MCF 10A (cell line): ENCODE measurements at regions of chrX and their contacts with region 1.

Region 1: GRCh38 chrX:65667503-65668376 is at the start of gene MSN:
- DNase-seq: peak; percentile 61
- H3K4me3 Mint-ChIP-seq: peak within 1 kb of the TSS; percentile 83
- H3K27ac Mint-ChIP-seq: peak within 1 kb of the TSS; percentile 76
- H3K4me1 Mint-ChIP-seq: peaks cover 23% of the 10 kb centered on the region
- H3K27me3 Mint-ChIP-seq: no peaks in the 10 kb centered on the region
- CTCF ChIP-seq: no peak
- total RNA-seq, gene MSN: 224 and 278 TPM in 2 replicates

Region 2: DNA sequence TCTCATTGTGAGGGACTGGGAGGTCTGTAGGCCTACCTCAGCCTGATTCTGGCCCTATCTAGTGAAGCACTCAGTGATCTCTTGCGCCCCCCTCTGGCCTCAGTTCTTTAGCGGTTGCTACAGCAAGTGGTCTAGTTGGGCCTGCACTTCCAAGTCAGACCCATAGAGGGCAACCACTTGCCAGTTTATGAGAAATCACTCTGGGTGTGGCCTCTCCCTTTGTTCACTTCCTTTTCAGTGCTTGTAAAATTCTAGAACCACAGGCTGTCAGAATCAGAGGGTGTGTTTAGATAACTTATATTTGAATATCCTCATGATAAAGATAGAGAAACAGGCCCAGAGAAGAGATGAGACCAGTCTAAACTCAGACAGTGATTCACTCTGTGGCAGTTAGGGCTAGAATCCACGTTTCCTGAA is 72.3 kb before region 1 on chrX:
- CTCF ChIA-PET with region 1: interaction called, 8 read pairs
- POLR2A ChIA-PET with region 1: no interaction called
- intact Hi-C with region 1: loop called (anchors 1 kb)
- DNase-seq: peak; percentile 92
- H3K4me3 Mint-ChIP-seq: no peak overlapping the region
- H3K27ac Mint-ChIP-seq: no peak overlapping the region
- H3K4me1 Mint-ChIP-seq: peaks cover 13% of the 10 kb centered on the region
- H3K27me3 Mint-ChIP-seq: no peaks in the 10 kb centered on the region
- CTCF ChIP-seq: peak; percentile 96

Region 3: GRCh38 chrX:65644621-65645270 is 23.0 kb before region 1 on chrX:
- CTCF ChIA-PET with region 1: interaction called, 5 read pairs
- POLR2A ChIA-PET with region 1: interaction called, 39 read pairs
- intact Hi-C with region 1: no loop called
- DNase-seq: peak; percentile 91
- H3K4me3 Mint-ChIP-seq: peak overlapping the region; percentile 31
- H3K27ac Mint-ChIP-seq: peak overlapping the region; percentile 63
- H3K4me1 Mint-ChIP-seq: peaks cover 32% of the 10 kb centered on the region
- H3K27me3 Mint-ChIP-seq: no peaks in the 10 kb centered on the region
- CTCF ChIP-seq: no peak

Region 4: DNA sequence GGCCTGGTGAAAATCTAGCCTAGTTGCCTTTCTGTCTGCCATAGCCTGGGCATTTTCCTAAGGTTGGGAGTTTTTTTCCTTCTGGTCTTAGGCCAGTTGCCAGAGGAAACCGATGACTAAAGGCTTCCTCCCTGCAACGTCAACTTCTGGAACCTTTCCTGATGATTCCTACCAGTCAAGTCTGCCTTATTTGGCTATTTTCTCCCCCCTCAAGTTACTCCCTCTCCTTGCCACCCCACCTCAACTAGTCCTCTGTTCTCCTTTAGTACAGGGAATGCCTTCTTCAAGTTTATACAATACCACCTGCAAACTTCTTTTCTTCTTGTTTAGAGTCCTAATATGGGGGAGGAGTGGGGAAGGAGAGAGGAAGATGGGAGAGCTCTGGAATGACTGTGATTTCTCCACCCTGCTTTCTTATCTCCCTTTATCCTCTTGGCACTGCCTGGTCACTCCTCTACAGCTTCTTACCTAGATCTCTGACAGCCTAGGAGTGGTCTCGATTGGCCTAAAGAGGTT is 10.3 kb after region 1 on chrX:
- CTCF ChIA-PET with region 1: interaction called, 4 read pairs
- POLR2A ChIA-PET with region 1: interaction called, 18 read pairs
- intact Hi-C with region 1: no loop called
- DNase-seq: peak; percentile 87
- H3K4me3 Mint-ChIP-seq: peak overlapping the region; percentile 9
- H3K27ac Mint-ChIP-seq: peak overlapping the region; percentile 90
- H3K4me1 Mint-ChIP-seq: peaks cover 40% of the 10 kb centered on the region
- H3K27me3 Mint-ChIP-seq: no peaks in the 10 kb centered on the region
- CTCF ChIP-seq: no peak

Region 5: DNA sequence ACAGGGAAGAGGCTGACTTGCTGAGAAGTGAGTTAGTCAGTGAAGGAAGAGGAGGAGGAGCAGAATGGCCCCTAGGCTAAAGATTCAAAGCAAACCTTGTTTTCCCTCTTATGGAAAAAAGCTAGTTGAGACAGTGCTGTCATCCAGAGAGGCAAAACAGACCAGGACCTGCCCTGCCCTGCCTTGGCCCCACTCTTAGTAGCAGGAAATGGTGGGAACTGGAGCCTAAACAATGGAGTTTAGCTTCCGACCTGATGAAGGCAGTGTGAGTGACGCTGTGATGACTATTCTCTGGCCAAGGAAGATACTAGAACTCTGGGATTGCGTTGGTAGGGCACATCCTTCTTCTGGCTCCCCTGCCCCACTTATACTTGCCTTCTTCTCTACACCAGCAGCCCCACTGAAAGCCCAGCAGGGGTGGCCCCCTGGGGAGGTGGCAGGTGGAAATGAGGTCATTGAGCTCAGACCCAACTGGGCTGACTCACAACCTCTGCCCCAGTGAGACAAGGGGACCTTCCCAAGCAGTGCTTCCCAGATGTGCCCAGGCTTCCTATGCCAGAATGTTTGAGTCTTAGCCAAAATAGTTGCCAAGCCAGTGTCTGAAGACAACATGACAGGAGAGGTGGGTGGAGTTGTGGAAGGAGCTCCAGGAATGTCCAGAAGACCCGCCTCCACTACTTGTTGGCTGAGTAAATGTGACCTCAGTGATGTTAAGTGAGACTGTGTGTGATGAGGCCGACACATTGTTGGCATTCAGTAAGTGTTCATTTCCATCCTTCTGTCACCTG is 38.5 kb after region 1 on chrX:
- CTCF ChIA-PET with region 1: interaction called, 23 read pairs
- POLR2A ChIA-PET with region 1: interaction called, 18 read pairs
- intact Hi-C with region 1: loop called (anchors 1 kb)
- DNase-seq: peak; percentile 90
- H3K4me3 Mint-ChIP-seq: no peak overlapping the region
- H3K27ac Mint-ChIP-seq: peak overlapping the region; percentile 82
- H3K4me1 Mint-ChIP-seq: peaks cover 36% of the 10 kb centered on the region
- H3K27me3 Mint-ChIP-seq: no peaks in the 10 kb centered on the region
- CTCF ChIP-seq: no peak

Region 6: GRCh38 chrX:65750674-65751469 is 83.1 kb after region 1 on chrX:
- CTCF ChIA-PET with region 1: no interaction called
- POLR2A ChIA-PET with region 1: no interaction called
- intact Hi-C with region 1: no loop called
- DNase-seq: no peak
- H3K4me3 Mint-ChIP-seq: no peak overlapping the region
- H3K27ac Mint-ChIP-seq: no peak overlapping the region
- H3K4me1 Mint-ChIP-seq: peaks cover 18% of the 10 kb centered on the region
- H3K27me3 Mint-ChIP-seq: no peaks in the 10 kb centered on the region
- CTCF ChIP-seq: no peak

Region 7: DNA sequence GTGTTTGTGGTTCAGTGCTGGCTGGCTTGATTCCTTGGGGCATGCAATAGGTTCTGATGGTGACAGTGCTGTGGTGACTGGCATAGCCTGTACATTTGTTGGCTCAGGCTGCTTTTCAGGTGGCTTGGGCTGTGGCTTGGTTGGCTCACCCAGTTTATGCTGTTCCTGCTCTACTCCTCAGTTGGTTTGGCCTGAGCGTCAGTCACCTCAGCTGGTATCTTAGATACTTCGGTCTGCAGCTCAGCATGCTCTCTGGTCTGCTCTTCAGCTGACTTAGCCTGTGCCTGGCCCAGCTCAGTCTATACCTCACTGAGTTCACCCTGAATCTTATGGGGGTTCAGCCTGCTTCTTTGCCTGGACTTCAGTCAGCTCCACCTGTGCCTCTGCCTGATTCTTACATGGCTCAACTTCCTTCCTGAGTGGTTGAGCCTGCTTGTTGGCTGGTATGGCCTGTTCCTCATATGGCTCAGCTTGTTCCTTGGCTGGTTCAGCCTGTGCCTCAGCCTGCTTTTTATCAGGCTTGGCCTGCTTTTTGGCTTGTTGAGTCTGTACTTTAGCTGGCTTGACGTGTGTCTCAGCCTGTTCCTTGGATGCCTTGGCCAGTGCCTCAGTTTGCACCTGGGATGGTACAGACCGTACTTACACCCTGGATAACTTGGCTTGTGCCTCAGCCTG is 170.3 kb after region 1 on chrX:
- CTCF ChIA-PET with region 1: no interaction called
- POLR2A ChIA-PET with region 1: no interaction called
- intact Hi-C with region 1: no loop called
- DNase-seq: no peak
- H3K4me3 Mint-ChIP-seq: no peak overlapping the region
- H3K27ac Mint-ChIP-seq: no peak overlapping the region
- H3K4me1 Mint-ChIP-seq: no peaks in the 10 kb centered on the region
- H3K27me3 Mint-ChIP-seq: no peaks in the 10 kb centered on the region
- CTCF ChIP-seq: no peak